ENCODE measurements at regions of chr5 and their contacts with region 1.

Region 1: GRCh38 chr5:75336625-75337339 is at the start of gene HMGCR:
- DNase-seq: peak; percentile 98
- H3K4me3 ChIP-seq: peak within 1 kb of the TSS; percentile 83
- H3K27ac ChIP-seq: peak within 1 kb of the TSS; percentile 78
- H3K4me1 ChIP-seq: peaks cover 47% of the 10 kb centered on the region
- H3K27me3 ChIP-seq: no peaks in the 10 kb centered on the region
- CTCF ChIP-seq: peak; percentile 11; the same call in 1 of the 2 replicates
- total RNA-seq, gene HMGCR: 55.0 and 86.8 TPM in 2 replicates

Region 2: GRCh38 chr5:73812457-73812856 is 1524.3 kb before region 1 on chr5:
- CTCF ChIA-PET with region 1: no interaction called
- POLR2A ChIA-PET with region 1: interaction called, 20 read pairs
- intact Hi-C with region 1: no loop called
- DNase-seq: no peak
- H3K4me3 ChIP-seq: no peak overlapping the region
- H3K27ac ChIP-seq: no peak overlapping the region
- H3K4me1 ChIP-seq: peaks cover 6% of the 10 kb centered on the region
- H3K27me3 ChIP-seq: no peaks in the 10 kb centered on the region
- CTCF ChIP-seq: no peak

Region 3: DNA sequence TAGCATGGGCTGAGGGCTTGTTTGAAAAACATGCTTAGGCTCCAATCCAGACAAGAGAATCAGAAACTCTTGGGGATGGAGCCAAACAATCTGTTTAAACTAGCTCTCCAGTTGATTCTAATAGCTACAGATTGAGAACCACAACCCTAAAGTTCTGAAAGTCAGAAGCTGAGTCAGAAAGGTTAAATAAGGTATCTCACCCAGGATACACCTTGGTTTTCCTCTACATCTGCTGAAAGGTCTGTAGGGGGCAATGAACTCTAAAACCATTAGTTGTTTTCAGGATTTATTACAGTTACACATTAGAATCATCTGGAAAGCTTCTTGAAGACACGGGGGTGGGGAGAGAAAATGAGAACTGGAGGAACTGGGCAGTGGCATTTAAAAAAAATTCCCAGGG is 575.5 kb before region 1 on chr5:
- CTCF ChIA-PET with region 1: interaction called, 15 read pairs
- POLR2A ChIA-PET with region 1: interaction called, 12 read pairs
- intact Hi-C with region 1: no loop called
- DNase-seq: no peak
- H3K4me3 ChIP-seq: no peak overlapping the region
- H3K27ac ChIP-seq: peak overlapping the region; percentile 90; the same call in 1 of the 2 replicates
- H3K4me1 ChIP-seq: peaks cover 47% of the 10 kb centered on the region
- H3K27me3 ChIP-seq: no peaks in the 10 kb centered on the region
- CTCF ChIP-seq: no peak

Region 4: GRCh38 chr5:75037135-75037534 is 299.6 kb before region 1 on chr5:
- CTCF ChIA-PET with region 1: interaction called, 5 read pairs
- POLR2A ChIA-PET with region 1: no interaction called
- intact Hi-C with region 1: loop called (anchors 5 kb)
- DNase-seq: peak; percentile 85 to 99
- H3K4me3 ChIP-seq: no peak overlapping the region; the same call in 1 of the 2 replicates
- H3K27ac ChIP-seq: peak overlapping the region; percentile 88
- H3K4me1 ChIP-seq: peaks cover 48% of the 10 kb centered on the region
- H3K27me3 ChIP-seq: no peaks in the 10 kb centered on the region
- CTCF ChIP-seq: no peak

Region 5: DNA sequence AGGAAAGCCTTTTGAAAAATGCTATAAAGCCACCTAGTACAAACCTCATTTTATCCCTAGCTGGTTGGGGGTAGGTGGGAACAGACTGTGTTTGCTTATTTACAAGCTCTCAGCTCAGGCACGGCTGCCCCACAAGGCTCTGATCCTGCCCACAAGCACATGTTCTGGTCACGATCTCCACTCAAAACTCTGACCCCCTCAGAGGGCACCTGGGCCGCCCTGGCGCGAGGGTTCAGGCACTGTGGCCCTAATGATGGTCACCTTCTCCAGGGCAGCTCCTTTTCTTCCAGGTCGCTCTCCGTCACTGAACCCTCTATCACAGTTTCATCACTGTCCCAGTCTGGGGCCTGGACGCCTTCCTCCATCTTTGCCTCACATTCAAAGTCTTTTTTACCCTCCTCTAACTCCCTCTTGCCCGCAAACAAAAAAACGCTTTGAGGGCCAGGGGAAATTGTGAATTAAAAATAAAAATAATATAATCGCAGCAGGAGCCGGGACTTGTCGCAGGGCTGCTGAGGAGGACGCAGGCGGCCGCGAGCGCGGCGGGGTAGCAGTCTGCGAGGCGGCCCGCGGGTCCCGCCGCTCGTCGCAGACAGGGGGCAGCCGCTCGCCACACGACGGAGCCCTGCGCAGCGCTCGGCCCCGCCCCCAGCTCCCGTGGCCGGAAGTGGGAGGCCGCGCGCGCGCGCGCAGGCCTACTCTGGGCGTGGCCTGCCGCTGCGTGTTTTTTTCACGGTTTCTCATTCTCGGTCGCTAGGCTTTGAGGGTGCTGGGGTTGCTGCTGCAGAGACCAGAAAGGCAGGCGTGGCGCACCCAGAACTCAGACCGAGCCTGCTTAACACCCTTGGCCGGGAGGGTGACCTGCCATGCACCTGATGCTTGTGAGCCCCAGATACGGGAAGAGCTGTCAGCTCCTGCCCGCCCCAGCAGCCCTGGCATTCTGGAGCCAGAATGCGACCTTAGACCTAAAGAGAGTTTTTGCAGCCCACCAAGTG is 100.2 kb before region 1 on chr5 and contains the start of gene ANKRD31:
- CTCF ChIA-PET with region 1: interaction called, 11 read pairs
- POLR2A ChIA-PET with region 1: interaction called, 4 read pairs
- intact Hi-C with region 1: loop called (anchors 1 kb)
- DNase-seq: peak; percentile 52 to 84
- H3K4me3 ChIP-seq: peak within 1 kb of the TSS; percentile 94
- H3K27ac ChIP-seq: peak within 1 kb of the TSS; percentile 43
- H3K4me1 ChIP-seq: peaks cover 33% of the 10 kb centered on the region
- H3K27me3 ChIP-seq: no peaks in the 10 kb centered on the region
- CTCF ChIP-seq: no peak; the same call in none of the 2 replicates
- total RNA-seq, gene ANKRD31: 0.23 and 0.48 TPM in 2 replicates

Region 6: GRCh38 chr5:75426215-75426614 is 89.4 kb after region 1 on chr5:
- CTCF ChIA-PET with region 1: no interaction called
- POLR2A ChIA-PET with region 1: interaction called, 10 read pairs
- intact Hi-C with region 1: no loop called
- DNase-seq: no peak
- H3K4me3 ChIP-seq: no peak overlapping the region
- H3K27ac ChIP-seq: no peak overlapping the region
- H3K4me1 ChIP-seq: no peaks in the 10 kb centered on the region
- H3K27me3 ChIP-seq: no peaks in the 10 kb centered on the region
- CTCF ChIP-seq: no peak